ENCODE measurements at regions of chr10 and their contacts with region 1.

Region 1: GRCh38 chr10:13787015-13787421 is 200.3 kb downstream of the PRPF18 start:
- DNase-seq: no peak
- ATAC-seq: peak; percentile 36
- H3K4me3 ChIP-seq: no peak overlapping the region
- H3K27ac ChIP-seq: peak overlapping the region in 1 of 4 donors; percentile 45
- H3K4me1 ChIP-seq: peaks cover 20% of the 10 kb centered on the region
- H3K27me3 ChIP-seq: no peaks in the 10 kb centered on the region
- CTCF ChIP-seq: no peak
- POLR2A ChIP-seq: no peak

Region 2: GRCh38 chr10:14093730-14094484 is 306.9 kb after region 1 on chr10:
- intact Hi-C with region 1: loop called (anchors 10 kb)
- DNase-seq: no peak
- ATAC-seq: no peak
- H3K4me3 ChIP-seq: no peak overlapping the region
- H3K27ac ChIP-seq: no peak overlapping the region
- H3K4me1 ChIP-seq: peaks cover 11% of the 10 kb centered on the region
- H3K27me3 ChIP-seq: no peaks in the 10 kb centered on the region
- CTCF ChIP-seq: peak in 5 of 7 experiments; percentile 20 to 48 (median 38)
- POLR2A ChIP-seq: no peak

Region 3: GRCh38 chr10:14478604-14479003 is 691.6 kb after region 1 on chr10:
- intact Hi-C with region 1: loop called (anchors 10 kb)
- DNase-seq: peak; percentile 83 to 92 (median 88)
- ATAC-seq: peak; percentile 93
- H3K4me3 ChIP-seq: no peak overlapping the region
- H3K27ac ChIP-seq: peak overlapping the region in 3 of 4 donors; percentile 27 to 69 (median 53)
- H3K4me1 ChIP-seq: peaks cover 14% of the 10 kb centered on the region
- H3K27me3 ChIP-seq: no peaks in the 10 kb centered on the region
- CTCF ChIP-seq: peak; percentile 63 to 93 (median 89)
- POLR2A ChIP-seq: no peak

Measured in body of pancreas (tissue), 4 donors.